ENCODE measurements at regions of chr1 and their contacts with region 1.

Region 1: DNA sequence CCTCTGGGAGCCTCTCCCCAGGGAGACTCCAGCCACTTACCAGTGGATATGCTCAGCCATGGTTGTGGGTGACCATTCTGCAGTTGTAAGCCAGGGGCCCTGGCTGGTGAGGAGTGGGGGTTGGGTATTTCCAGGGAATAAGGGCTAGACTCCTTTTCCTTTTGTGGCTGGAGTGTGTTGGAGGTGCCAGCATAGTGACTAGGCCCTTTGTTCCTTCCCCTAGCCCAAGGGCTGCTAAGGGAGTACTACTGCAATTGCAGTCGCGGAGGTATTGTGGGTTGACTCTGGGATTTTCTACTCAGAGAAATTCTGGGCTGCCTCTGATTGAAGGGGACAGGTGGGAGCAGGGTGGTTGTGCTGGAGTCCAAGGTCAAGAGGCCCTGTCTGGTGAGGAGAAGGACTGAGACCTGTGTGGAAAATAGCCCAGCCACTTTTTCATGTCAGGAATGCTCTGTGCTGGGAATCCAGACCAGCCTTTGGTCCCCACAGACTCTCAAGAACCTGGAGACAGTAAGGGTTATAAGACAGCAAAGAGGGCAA is 43.1 kb downstream of the MROH9 start:
- DNase-seq: no peak
- H3K4me3 ChIP-seq: no peak overlapping the region
- H3K27ac ChIP-seq: no peak overlapping the region
- H3K4me1 ChIP-seq: no peaks in the 10 kb centered on the region
- H3K27me3 ChIP-seq: no peaks in the 10 kb centered on the region
- CTCF ChIP-seq: no peak
- EP300 ChIP-seq: no peak
- RAD21 ChIP-seq: no peak

Region 2: GRCh38 chr1:170929835-170930554 is 48.4 kb before region 1 on chr1:
- CTCF ChIA-PET with region 1: no interaction called
- POLR2A ChIA-PET with region 1: no interaction called
- DNase-seq: peak; percentile 49
- H3K4me3 ChIP-seq: peak overlapping the region; percentile 19 to 38; a peak in 3 of 4 replicates
- H3K27ac ChIP-seq: peak overlapping the region; percentile 84 to 94
- H3K4me1 ChIP-seq: peaks cover 0 to 15% of the 10 kb centered on the region in 2 experiments; a peak in 2 of 4 replicates
- H3K27me3 ChIP-seq: no peaks in the 10 kb centered on the region
- CTCF ChIP-seq: peak; percentile 87
- EP300 ChIP-seq: peak in 1 of 2 experiments; percentile 72; a peak in 2 of 4 replicates
- RAD21 ChIP-seq: peak; percentile 73

Region 3: GRCh38 chr1:170967042-170967910 is 11.2 kb before region 1 on chr1:
- CTCF ChIA-PET with region 1: interaction called, 13 read pairs
- POLR2A ChIA-PET with region 1: no interaction called
- DNase-seq: peak; percentile 12
- H3K4me3 ChIP-seq: no peak overlapping the region
- H3K27ac ChIP-seq: no peak overlapping the region
- H3K4me1 ChIP-seq: peaks cover 0 to 4% of the 10 kb centered on the region in 2 experiments; a peak in 2 of 4 replicates
- H3K27me3 ChIP-seq: no peaks in the 10 kb centered on the region
- CTCF ChIP-seq: peak; percentile 76
- EP300 ChIP-seq: no peak
- RAD21 ChIP-seq: peak; percentile 57

Measured in SK-N-SH (cell line).